Activated naive CD8-positive, alpha-beta T cell treated with anti-CD3 and anti-CD28 coated beads, Interleukin-2, amount 10 ng/mL, durations not matched to agents 7 days and 5 days (primary cell): ENCODE measurements at regions of chr14 and their contacts with region 1.

Region 1: DNA sequence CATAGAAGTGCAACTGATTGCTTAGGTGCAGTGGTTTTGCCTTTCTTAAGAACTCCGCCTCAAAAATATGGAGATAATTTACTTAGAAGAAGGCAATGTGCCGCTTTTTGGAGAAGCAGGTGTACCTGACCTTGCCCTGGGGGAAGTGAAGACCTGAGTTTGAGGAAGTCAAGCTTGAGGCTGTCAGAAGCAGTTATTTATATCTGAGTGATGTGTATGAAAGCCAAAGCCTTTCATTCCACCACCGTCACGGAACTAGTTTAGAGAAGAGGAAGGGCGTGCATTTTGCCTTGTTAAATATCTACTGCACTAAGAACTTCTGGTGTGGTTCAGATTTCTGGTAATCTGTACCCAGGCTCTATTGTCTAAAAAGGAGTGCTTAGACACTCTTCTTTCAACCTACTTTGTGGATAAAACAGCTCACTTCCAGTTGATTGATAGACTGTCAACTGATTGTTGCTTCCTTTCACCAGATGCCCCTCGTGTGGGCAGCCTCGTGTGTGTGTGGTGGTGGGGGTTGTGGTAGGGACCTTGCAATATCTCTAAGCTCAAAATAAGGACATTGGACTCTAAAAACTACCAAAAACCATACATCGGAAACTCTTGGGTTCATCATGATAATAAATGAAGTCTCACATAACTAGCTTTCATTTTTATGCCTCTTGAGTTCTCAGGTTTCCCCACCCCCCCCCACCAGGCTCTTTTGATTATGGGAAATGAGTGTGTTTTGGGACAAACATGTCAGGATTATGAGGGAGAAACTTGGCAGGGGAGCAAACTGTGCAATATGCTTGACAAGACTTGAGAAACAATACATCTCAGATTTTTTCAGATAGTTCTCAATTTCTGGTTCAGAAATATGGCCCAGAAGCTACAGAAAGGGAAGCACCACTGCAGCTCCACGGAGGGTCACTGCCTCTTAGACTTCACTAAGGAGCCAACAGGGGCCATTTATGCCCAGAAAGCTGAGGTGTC is 78.6 kb downstream of the ARF6 start:
- DNase-seq: peak; percentile 73
- ATAC-seq: peak; percentile 80
- H3K4me3 Mint-ChIP-seq: peak overlapping the region; percentile 91
- H3K27ac Mint-ChIP-seq: peak overlapping the region; percentile 99
- H3K4me1 Mint-ChIP-seq: peaks cover 50% of the 10 kb centered on the region
- H3K27me3 Mint-ChIP-seq: no peaks in the 10 kb centered on the region

Region 2: GRCh38 chr14:49867831-49868723 is 103.4 kb before region 1 on chr14:
- POLR2A ChIA-PET with region 1: interaction called, 53 read pairs
- DNase-seq: peak; percentile 94
- ATAC-seq: peak; percentile 93
- H3K4me3 Mint-ChIP-seq: peak overlapping the region; percentile 98
- H3K27ac Mint-ChIP-seq: peak overlapping the region; percentile 98
- H3K4me1 Mint-ChIP-seq: peaks cover 13% of the 10 kb centered on the region
- H3K27me3 Mint-ChIP-seq: no peaks in the 10 kb centered on the region

Region 3: GRCh38 chr14:49898485-49898884 is 73.0 kb before region 1 on chr14:
- POLR2A ChIA-PET with region 1: interaction called, 62 read pairs
- DNase-seq: no peak
- ATAC-seq: no peak
- H3K4me3 Mint-ChIP-seq: peak overlapping the region; percentile 83
- H3K27ac Mint-ChIP-seq: peak overlapping the region; percentile 86
- H3K4me1 Mint-ChIP-seq: peaks cover 26% of the 10 kb centered on the region
- H3K27me3 Mint-ChIP-seq: no peaks in the 10 kb centered on the region

Region 4: DNA sequence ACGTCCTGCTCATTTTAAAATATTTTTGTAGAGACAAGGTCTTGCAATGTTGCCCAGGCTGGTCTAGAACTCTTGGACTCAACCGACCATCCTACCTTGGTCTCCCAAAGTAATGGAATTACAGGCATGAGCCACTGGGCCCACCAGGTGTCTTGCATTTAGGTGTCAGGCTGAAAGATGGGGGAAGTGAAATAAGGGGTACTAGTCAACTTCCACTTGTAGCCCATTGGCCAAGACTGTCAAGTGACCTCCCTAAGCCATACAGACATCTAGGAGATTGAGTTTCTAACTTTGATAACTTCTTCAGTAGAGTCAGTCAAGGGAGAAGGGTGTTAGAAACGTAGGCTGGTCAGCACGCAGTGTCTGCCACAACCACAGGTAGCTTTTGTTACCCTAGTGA is 46.6 kb before region 1 on chr14:
- POLR2A ChIA-PET with region 1: no interaction called
- DNase-seq: no peak
- ATAC-seq: no peak
- H3K4me3 Mint-ChIP-seq: no peak overlapping the region
- H3K27ac Mint-ChIP-seq: no peak overlapping the region
- H3K4me1 Mint-ChIP-seq: peaks cover 17% of the 10 kb centered on the region
- H3K27me3 Mint-ChIP-seq: no peaks in the 10 kb centered on the region

Region 5: GRCh38 chr14:49940808-49941421 is 30.5 kb before region 1 on chr14:
- POLR2A ChIA-PET with region 1: interaction called, 53 read pairs
- DNase-seq: no peak
- ATAC-seq: peak; percentile 48
- H3K4me3 Mint-ChIP-seq: peak overlapping the region; percentile 54
- H3K27ac Mint-ChIP-seq: peak overlapping the region; percentile 74
- H3K4me1 Mint-ChIP-seq: peaks cover 45% of the 10 kb centered on the region
- H3K27me3 Mint-ChIP-seq: no peaks in the 10 kb centered on the region

Region 6: GRCh38 chr14:50060871-50061663 is 89.6 kb after region 1 on chr14:
- POLR2A ChIA-PET with region 1: interaction called, 52 read pairs
- DNase-seq: peak; percentile 65
- ATAC-seq: peak; percentile 11
- H3K4me3 Mint-ChIP-seq: peak overlapping the region; percentile 99
- H3K27ac Mint-ChIP-seq: peak overlapping the region; percentile 100
- H3K4me1 Mint-ChIP-seq: peaks cover 76% of the 10 kb centered on the region
- H3K27me3 Mint-ChIP-seq: no peaks in the 10 kb centered on the region

Region 7: GRCh38 chr14:50099335-50099734 is 127.9 kb after region 1 on chr14:
- POLR2A ChIA-PET with region 1: interaction called, 12 read pairs
- DNase-seq: no peak
- ATAC-seq: peak; percentile 46
- H3K4me3 Mint-ChIP-seq: peak overlapping the region; percentile 33
- H3K27ac Mint-ChIP-seq: peak overlapping the region; percentile 70
- H3K4me1 Mint-ChIP-seq: peaks cover 56% of the 10 kb centered on the region
- H3K27me3 Mint-ChIP-seq: no peaks in the 10 kb centered on the region